ENCODE measurements at regions of chr18 and their contacts with region 1.

Region 1: GRCh38 chr18:24659827-24660720 is 199.6 kb downstream of the HRH4 start:
- DNase-seq: peak; percentile 35 to 50
- ATAC-seq: peak in 7 of 8 donors; percentile 51 to 74 (median 60)
- H3K4me3 ChIP-seq: peak overlapping the region; percentile 26 to 58 (median 50)
- H3K27ac ChIP-seq: peak overlapping the region; percentile 27 to 93 (median 79)
- H3K4me1 ChIP-seq: peaks cover 0 to 47% (median 22%) of the 10 kb centered on the region in 9 donors
- H3K27me3 ChIP-seq: peaks cover 0 to 3% (median 0%) of the 10 kb centered on the region in 7 donors
- CTCF ChIP-seq: no peak

Region 2: DNA sequence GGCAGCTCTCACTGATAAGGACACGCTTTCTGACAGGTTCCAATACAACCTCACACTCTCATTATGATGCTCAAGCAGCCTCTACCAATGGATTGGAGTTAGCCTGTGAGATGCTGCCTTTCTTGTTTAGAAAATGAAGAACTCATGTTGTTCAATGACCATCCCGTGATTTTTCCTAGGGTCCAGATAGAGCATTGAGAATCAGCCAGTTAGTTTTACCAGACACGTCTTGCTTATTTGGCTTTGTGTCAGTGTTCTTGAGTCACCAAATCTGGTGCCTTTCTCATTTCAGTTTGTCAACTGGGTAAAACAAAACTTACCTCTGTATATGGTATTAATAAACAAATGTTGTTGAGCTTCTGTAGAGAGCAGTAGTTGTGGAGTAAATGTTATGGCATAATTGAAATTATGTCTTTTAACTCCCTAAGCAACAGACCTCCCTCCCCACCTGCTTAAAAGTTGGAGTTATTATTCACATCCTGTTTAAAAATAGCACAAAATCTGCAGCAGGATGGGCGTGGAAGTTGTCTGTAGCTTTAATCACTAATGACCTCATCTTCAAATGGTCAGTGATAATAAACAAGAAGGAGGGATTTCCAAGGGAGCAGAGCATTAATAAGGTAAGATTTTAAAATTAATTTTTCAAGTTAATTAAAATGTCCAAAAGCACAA is 32.3 kb before region 1 on chr18:
- intact Hi-C with region 1: loop called in 1 of 10 experiments (anchors 2 kb)
- DNase-seq: peak in 1 of 2 donors; percentile 17
- ATAC-seq: peak in 5 of 8 donors; percentile 40 to 71 (median 64)
- H3K4me3 ChIP-seq: peak overlapping the region in 2 of 10 donors; percentile 14 to 27
- H3K27ac ChIP-seq: peak overlapping the region in 6 of 10 donors; percentile 0 to 78 (median 44)
- H3K4me1 ChIP-seq: peaks cover 12 to 55% (median 37%) of the 10 kb centered on the region in 9 donors
- H3K27me3 ChIP-seq: no peaks in the 10 kb centered on the region
- CTCF ChIP-seq: no peak